ENCODE measurements at regions of chrX and their contacts with region 1.

Region 1: DNA sequence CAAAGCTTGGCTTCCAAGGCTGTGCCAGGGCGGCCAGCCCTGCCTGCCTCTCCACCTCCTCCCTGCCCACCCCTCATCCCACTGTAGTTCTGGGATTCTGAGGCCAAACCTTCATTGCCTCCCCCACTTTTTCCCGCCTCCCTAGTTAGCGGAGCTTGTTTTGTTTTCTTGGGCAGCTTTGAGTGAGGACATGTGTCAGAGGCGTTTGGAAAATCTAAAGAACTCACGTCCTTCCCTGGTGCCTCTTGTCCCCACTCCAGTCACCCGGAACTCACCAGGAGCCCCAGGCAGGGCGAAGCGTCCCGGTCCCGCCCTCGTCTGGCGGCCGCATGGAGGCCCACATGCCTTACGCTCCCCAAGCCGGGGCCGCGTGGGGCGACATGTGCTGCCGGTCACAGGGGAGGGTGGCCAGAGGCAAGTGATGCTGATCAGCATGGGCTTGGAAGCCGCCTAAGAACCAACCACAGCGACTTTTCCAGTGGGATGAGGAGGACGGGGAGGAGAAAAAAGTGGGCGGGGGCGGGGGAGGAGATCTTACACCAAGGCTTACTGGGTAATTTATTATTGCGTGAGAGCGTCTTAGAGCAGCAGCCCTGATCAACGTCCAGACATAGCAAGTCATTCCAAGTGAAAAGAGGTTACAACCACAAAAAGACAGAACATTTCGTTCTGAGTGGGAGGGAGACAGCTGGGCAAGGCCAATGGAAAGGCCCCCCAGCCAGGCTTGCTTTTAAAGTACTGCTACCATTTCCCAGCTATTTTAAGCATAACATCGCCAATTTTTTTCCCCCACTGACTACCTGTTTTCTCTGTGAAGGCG is 48.5 kb downstream of the PRPS1 start:
- DNase-seq: peak; percentile 94
- H3K4me3 ChIP-seq: peak overlapping the region in 1 of 3 donors; percentile 26
- H3K27ac ChIP-seq: peak overlapping the region; percentile 94 to 99 (median 99)
- H3K4me1 ChIP-seq: peaks cover 27 to 43% of the 10 kb centered on the region in 2 donors
- H3K27me3 ChIP-seq: no peaks in the 10 kb centered on the region
- CTCF ChIP-seq: no peak
- POLR2A ChIP-seq: peak in 1 of 2 donors; percentile 48

Region 2: DNA sequence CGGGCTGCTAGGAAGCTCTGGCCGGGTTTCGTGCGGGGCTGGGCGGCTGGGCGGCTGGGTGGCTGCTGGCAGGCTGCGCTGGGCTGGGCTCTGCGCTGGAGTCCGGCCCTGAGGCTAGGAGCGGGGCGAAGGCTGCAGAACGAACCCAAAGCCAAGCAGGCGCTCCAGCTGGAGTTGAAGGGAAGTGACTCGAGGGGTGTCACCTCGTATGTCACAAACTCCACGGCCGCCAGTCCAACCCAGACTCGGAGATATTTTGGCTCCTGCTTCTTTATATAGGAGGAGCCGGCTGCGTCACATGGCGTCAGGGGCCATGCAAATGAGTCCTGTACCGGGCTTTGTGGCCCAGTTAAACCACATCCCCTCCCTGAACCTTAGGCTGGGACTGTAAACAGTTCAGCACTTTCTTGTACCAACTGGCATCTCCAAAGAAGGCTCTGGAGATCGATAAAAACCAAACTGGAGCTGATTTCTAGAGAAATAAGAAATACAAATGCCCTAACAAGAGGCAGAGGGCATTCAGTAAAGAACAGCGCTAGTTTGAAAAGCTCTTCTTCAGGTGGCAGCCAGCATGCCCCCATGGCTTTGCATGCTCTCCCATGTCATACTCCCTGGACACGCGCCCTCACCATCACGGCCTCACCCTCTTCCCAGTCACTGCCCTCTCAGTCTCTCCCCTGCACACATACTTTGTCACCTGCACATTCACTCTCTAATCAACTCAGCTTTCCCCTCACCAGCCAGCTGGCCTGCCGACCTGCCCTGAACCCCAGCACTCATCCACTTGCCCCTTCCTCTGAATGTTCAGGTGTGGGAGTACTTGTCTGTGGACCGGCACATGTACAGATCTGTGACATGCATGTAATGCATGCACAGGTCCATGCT is 40.3 kb after region 1 on chrX:
- intact Hi-C with region 1: loop called (anchors 5 kb)
- DNase-seq: peak; percentile 85 to 89
- H3K4me3 ChIP-seq: peak overlapping the region in 2 of 3 donors; percentile 59 to 91
- H3K27ac ChIP-seq: peak overlapping the region; percentile 99
- H3K4me1 ChIP-seq: peaks cover 7 to 25% of the 10 kb centered on the region in 2 donors
- H3K27me3 ChIP-seq: no peaks in the 10 kb centered on the region
- CTCF ChIP-seq: peak in 1 of 6 experiments; percentile 17
- POLR2A ChIP-seq: peak; percentile 94 to 98

Measured in thyroid gland (tissue), 4 donors.